H1 (cell line): ENCODE measurements at regions of chr7 and their contacts with region 1.

Region 1: DNA sequence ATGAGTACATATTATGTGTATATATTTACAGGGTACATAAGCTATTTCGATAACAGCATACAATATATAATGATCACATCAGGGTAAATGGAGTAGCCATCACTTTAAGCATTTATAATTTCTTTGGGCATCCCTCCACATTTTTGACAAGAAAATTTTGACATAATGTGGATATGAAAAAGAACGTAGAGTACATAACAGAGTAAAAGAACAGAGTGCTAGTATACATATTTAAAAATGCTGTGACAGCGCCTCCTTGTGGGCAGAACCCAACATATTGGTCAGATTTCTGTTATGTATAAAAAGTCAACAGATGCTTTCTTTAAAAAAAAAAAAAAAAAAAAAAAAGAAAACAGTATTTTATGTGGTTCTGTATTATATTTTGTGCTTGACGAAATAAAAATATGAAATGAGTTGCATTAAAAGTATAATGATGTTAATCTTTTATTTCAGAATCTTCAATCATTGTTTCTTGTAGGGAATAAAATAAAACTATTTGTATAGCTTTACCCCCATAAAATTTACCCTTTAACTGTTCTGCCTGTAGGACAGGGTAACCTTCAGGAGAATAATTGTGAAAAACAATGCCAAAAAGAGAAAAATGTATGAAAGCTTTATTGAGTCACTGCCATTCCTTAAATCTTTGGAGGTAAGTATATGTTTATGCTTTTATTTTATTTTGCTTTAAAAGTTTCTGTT is 18.3 kb upstream of the HBP1 start:
- DNase-seq: peak in 1 of 2 experiments; percentile 71
- H3K4me3 ChIP-seq: no peak overlapping the region
- H3K27ac ChIP-seq: no peak overlapping the region
- H3K4me1 ChIP-seq: peaks cover 0 to 3% (median under 1%) of the 10 kb centered on the region in 4 experiments; a peak in 2 of 7 replicates
- H3K27me3 ChIP-seq: no peaks in the 10 kb centered on the region
- CTCF ChIP-seq: peak in 2 of 3 experiments; percentile 36 to 51; a peak in 2 of 4 replicates
- EP300 ChIP-seq: no peak
- POLR2A ChIP-seq: no peak
- RAD21 ChIP-seq: peak; percentile 62 to 68

Region 2: DNA sequence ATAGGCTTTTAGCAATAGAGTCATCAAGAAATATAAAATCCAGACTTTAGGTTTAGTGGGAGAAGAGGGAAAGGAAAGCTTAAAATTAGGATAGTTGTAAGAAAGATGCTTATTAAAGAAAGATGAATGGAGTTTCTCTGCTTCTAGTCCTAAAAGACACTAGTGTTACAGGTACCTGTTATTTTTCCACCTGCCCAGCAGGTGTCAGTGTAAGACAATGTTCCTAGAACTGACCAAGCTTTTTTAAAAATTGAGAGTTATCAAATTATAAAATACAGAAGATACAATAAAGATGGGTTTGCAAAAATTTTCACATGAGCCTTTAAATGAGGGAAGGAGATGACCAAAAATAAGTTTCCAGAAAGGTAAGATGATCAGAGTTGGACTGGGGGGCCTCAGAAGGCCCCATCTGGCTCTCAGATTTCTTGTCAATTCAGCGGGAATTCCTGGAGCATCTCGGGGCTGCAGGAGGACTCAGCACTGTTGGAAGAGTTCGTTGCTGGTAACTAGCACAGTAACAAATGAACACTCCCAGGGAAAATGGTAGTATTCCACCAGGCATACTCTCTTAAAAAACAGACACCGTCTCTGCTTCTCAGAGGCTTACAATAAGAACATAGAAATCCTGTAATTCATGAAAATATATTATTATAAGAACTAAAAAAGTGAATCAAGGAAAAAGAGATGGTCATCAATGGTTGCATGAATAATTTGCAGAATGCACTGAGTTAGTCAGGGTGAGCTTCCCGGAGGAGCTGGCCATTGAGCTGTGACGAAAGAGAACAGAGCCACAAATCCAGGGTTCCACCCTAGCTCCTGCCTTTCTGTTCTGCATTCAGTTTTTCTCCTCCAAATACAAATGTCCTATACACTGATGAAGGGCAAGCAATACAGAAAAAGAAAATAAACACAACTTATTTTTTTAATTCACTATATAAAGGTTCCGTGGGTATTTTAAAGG is 357.2 kb before region 1 on chr7:
- CTCF ChIA-PET with region 1: interaction called, 29 read pairs
- POLR2A ChIA-PET with region 1: no interaction called
- DNase-seq: no peak
- H3K4me3 ChIP-seq: 0 out of 8 replicates have a peak overlapping the region, but pooled peaks of 1 of the 4 experiments have one; percentile 7
- H3K27ac ChIP-seq: no peak overlapping the region
- H3K4me1 ChIP-seq: no peaks in the 10 kb centered on the region
- H3K27me3 ChIP-seq: no peaks in the 10 kb centered on the region
- CTCF ChIP-seq: peak in 2 of 3 experiments; percentile 36 to 52; a peak in 2 of 4 replicates
- EP300 ChIP-seq: no peak
- POLR2A ChIP-seq: no peak
- RAD21 ChIP-seq: peak; percentile 75 to 82

Region 3: GRCh38 chr7:106959753-106960152 is 190.8 kb before region 1 on chr7:
- CTCF ChIA-PET with region 1: interaction called, 15 read pairs
- POLR2A ChIA-PET with region 1: no interaction called
- DNase-seq: peak in 1 of 2 experiments; percentile 58
- H3K4me3 ChIP-seq: no peak overlapping the region
- H3K27ac ChIP-seq: no peak overlapping the region
- H3K4me1 ChIP-seq: no peaks in the 10 kb centered on the region
- H3K27me3 ChIP-seq: no peaks in the 10 kb centered on the region
- CTCF ChIP-seq: peak in 2 of 3 experiments; percentile 69 to 78; a peak in 3 of 4 replicates
- EP300 ChIP-seq: no peak
- POLR2A ChIP-seq: no peak
- RAD21 ChIP-seq: peak; percentile 33 to 58

Region 4: GRCh38 chr7:107118112-107118900 is 32.2 kb before region 1 on chr7:
- CTCF ChIA-PET with region 1: interaction called, 19 read pairs
- POLR2A ChIA-PET with region 1: no interaction called
- DNase-seq: no peak
- H3K4me3 ChIP-seq: no peak overlapping the region
- H3K27ac ChIP-seq: no peak overlapping the region
- H3K4me1 ChIP-seq: no peaks in the 10 kb centered on the region; a peak in 1 of 7 replicates
- H3K27me3 ChIP-seq: no peaks in the 10 kb centered on the region
- CTCF ChIP-seq: no peak
- EP300 ChIP-seq: no peak
- POLR2A ChIP-seq: no peak
- RAD21 ChIP-seq: no peak

Region 5: GRCh38 chr7:107138696-107139420 is 11.7 kb before region 1 on chr7:
- CTCF ChIA-PET with region 1: interaction called, 67 read pairs
- POLR2A ChIA-PET with region 1: no interaction called
- DNase-seq: no peak
- H3K4me3 ChIP-seq: no peak overlapping the region
- H3K27ac ChIP-seq: no peak overlapping the region
- H3K4me1 ChIP-seq: peaks cover 0 to 4% (median 0%) of the 10 kb centered on the region in 4 experiments; a peak in 2 of 7 replicates
- H3K27me3 ChIP-seq: no peaks in the 10 kb centered on the region
- CTCF ChIP-seq: no peak
- EP300 ChIP-seq: no peak
- POLR2A ChIP-seq: no peak
- RAD21 ChIP-seq: no peak

Region 6: GRCh38 chr7:107168233-107169119 is 18.0 kb after region 1 on chr7 and contains the start of gene HBP1:
- CTCF ChIA-PET with region 1: interaction called, 68 read pairs
- POLR2A ChIA-PET with region 1: interaction called, 9 read pairs
- DNase-seq: peak; percentile 98 to 100
- H3K4me3 ChIP-seq: peak within 1 kb of the TSS; percentile 79 to 85 (median 84)
- H3K27ac ChIP-seq: peak within 1 kb of the TSS; percentile 96
- H3K4me1 ChIP-seq: peaks cover 0 to 5% (median under 1%) of the 10 kb centered on the region in 4 experiments; a peak in 3 of 7 replicates
- H3K27me3 ChIP-seq: no peaks in the 10 kb centered on the region
- CTCF ChIP-seq: no peak
- EP300 ChIP-seq: no peak
- POLR2A ChIP-seq: peak; percentile 21 to 66
- RAD21 ChIP-seq: no peak
- total RNA-seq, gene HBP1: 29.2 and 37.3 TPM in 2 replicates

Region 7: GRCh38 chr7:107253599-107253998 is 103.1 kb after region 1 on chr7:
- CTCF ChIA-PET with region 1: no interaction called
- POLR2A ChIA-PET with region 1: no interaction called
- DNase-seq: no peak
- H3K4me3 ChIP-seq: no peak overlapping the region
- H3K27ac ChIP-seq: no peak overlapping the region
- H3K4me1 ChIP-seq: no peaks in the 10 kb centered on the region
- H3K27me3 ChIP-seq: no peaks in the 10 kb centered on the region
- CTCF ChIP-seq: no peak
- EP300 ChIP-seq: no peak
- POLR2A ChIP-seq: no peak
- RAD21 ChIP-seq: no peak

Region 8: GRCh38 chr7:107291438-107291837 is 140.9 kb after region 1 on chr7:
- CTCF ChIA-PET with region 1: no interaction called
- POLR2A ChIA-PET with region 1: no interaction called
- DNase-seq: no peak
- H3K4me3 ChIP-seq: no peak overlapping the region
- H3K27ac ChIP-seq: no peak overlapping the region
- H3K4me1 ChIP-seq: no peaks in the 10 kb centered on the region
- H3K27me3 ChIP-seq: no peaks in the 10 kb centered on the region
- CTCF ChIP-seq: no peak
- EP300 ChIP-seq: no peak
- POLR2A ChIP-seq: no peak
- RAD21 ChIP-seq: no peak